ENCODE measurements at regions of chr14 and their contacts with region 1.

Region 1: DNA sequence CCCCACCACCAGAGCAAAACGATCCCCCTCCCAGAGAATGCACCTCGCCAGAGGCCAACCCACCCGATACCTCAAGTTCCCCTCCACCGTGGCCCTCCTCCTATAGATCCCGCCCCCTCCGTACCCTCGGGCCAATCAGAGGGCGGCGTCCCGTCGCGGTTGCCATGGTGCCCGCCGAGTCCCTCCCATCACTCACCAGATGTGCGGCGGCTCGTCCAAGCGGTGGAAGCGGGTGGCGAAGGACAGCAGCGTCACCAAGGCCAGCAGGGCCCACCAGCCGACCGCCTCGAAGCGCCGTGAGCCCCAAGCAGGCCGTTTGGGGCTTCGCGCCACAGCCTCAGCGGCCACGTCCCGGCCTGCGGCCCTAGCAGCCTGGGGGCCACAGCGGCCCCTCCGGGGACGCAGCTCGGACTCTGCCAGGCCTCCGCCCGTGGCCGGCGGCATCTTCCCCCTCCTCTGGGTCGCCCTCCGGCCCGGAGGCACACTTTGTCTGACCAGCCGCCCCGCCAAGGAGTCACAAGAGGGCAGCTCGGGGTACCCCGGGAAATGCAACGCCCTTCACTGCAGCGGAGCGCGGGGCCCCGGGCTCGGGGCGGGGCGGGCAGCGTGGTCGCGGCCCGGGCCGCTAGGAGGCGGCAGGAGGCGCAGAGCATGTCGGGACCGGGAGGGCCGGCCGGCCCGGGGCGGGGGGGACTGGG is at the start of gene POMT2:
- DNase-seq: peak; percentile 93
- H3K4me3 Mint-ChIP-seq: peak within 1 kb of the TSS; percentile 83
- H3K27ac Mint-ChIP-seq: peak within 1 kb of the TSS; percentile 95
- H3K4me1 Mint-ChIP-seq: peaks cover 28% of the 10 kb centered on the region
- H3K27me3 Mint-ChIP-seq: no peaks in the 10 kb centered on the region
- CTCF ChIP-seq: peak; percentile 28
- total RNA-seq, gene POMT2: 32.1 and 33.0 TPM in 2 replicates

Region 2: GRCh38 chr14:77301103-77301502 is 19.3 kb before region 1 on chr14:
- CTCF ChIA-PET with region 1: interaction called, 264 read pairs
- POLR2A ChIA-PET with region 1: interaction called, 108 read pairs
- intact Hi-C with region 1: loop called (anchors 1 kb)
- DNase-seq: peak; percentile 75
- H3K4me3 Mint-ChIP-seq: no peak overlapping the region
- H3K27ac Mint-ChIP-seq: no peak overlapping the region
- H3K4me1 Mint-ChIP-seq: peaks cover 24% of the 10 kb centered on the region
- H3K27me3 Mint-ChIP-seq: no peaks in the 10 kb centered on the region
- CTCF ChIP-seq: peak; percentile 83

Region 3: GRCh38 chr14:77335576-77335975 is 15.2 kb after region 1 on chr14:
- CTCF ChIA-PET with region 1: interaction called, 9 read pairs
- POLR2A ChIA-PET with region 1: interaction called, 11 read pairs
- intact Hi-C with region 1: no loop called
- DNase-seq: no peak
- H3K4me3 Mint-ChIP-seq: no peak overlapping the region
- H3K27ac Mint-ChIP-seq: no peak overlapping the region
- H3K4me1 Mint-ChIP-seq: peaks cover 6% of the 10 kb centered on the region
- H3K27me3 Mint-ChIP-seq: no peaks in the 10 kb centered on the region
- CTCF ChIP-seq: no peak

Region 4: GRCh38 chr14:77376771-77377501 is 56.5 kb after region 1 on chr14 and contains the starts of genes SAMD15 and TMED8:
- CTCF ChIA-PET with region 1: no interaction called
- POLR2A ChIA-PET with region 1: interaction called, 11 read pairs
- intact Hi-C with region 1: no loop called
- DNase-seq: peak; percentile 75
- H3K4me3 Mint-ChIP-seq: no peak within 1 kb of the TSS
- H3K27ac Mint-ChIP-seq: no peak within 1 kb of the TSS
- H3K4me1 Mint-ChIP-seq: peaks cover 12% of the 10 kb centered on the region
- H3K27me3 Mint-ChIP-seq: no peaks in the 10 kb centered on the region
- CTCF ChIP-seq: peak; percentile 13
- total RNA-seq, gene SAMD15: 0.81 and 0.86 TPM in 2 replicates
- total RNA-seq, gene TMED8: 9.3 and 12.9 TPM in 2 replicates

Region 5: GRCh38 chr14:77436042-77436441 is 115.7 kb after region 1 on chr14:
- CTCF ChIA-PET with region 1: no interaction called
- POLR2A ChIA-PET with region 1: no interaction called
- intact Hi-C with region 1: no loop called
- DNase-seq: no peak
- H3K4me3 Mint-ChIP-seq: no peak overlapping the region
- H3K27ac Mint-ChIP-seq: no peak overlapping the region
- H3K4me1 Mint-ChIP-seq: no peaks in the 10 kb centered on the region
- H3K27me3 Mint-ChIP-seq: no peaks in the 10 kb centered on the region
- CTCF ChIP-seq: no peak

Region 6: DNA sequence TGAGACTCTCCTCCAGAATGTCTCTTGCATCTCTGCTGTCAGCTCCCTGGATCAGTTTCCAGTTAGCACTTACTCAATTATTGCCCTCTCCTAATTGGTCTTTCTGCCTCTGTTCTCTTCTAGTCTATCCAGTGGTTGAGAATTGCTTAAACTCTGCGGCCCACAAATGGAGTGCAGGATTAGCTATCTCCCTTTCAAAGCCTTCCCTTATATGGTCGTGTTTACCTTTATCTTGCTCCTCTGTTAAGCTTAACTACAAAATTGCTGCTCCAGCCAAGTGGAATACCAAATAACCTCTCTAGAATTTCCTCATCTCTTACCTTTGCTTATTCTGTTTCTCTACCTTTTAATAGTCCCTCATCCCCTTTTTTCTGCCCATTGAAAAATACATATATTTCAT is 982.5 kb after region 1 on chr14:
- CTCF ChIA-PET with region 1: no interaction called
- POLR2A ChIA-PET with region 1: no interaction called
- intact Hi-C with region 1: no loop called
- DNase-seq: no peak
- H3K4me3 Mint-ChIP-seq: no peak overlapping the region
- H3K27ac Mint-ChIP-seq: no peak overlapping the region
- H3K4me1 Mint-ChIP-seq: no peaks in the 10 kb centered on the region
- H3K27me3 Mint-ChIP-seq: peaks cover 79% of the 10 kb centered on the region
- CTCF ChIP-seq: no peak